Dendritic cell treated with granulocyte-macrophage colony-stimulating factor and Interleukin-4, amounts not matched to agents 40 ng/mL and 50 ng/mL, for 4 days (primary cell): ENCODE measurements at regions of chr6 and their contacts with region 1.

Region 1: DNA sequence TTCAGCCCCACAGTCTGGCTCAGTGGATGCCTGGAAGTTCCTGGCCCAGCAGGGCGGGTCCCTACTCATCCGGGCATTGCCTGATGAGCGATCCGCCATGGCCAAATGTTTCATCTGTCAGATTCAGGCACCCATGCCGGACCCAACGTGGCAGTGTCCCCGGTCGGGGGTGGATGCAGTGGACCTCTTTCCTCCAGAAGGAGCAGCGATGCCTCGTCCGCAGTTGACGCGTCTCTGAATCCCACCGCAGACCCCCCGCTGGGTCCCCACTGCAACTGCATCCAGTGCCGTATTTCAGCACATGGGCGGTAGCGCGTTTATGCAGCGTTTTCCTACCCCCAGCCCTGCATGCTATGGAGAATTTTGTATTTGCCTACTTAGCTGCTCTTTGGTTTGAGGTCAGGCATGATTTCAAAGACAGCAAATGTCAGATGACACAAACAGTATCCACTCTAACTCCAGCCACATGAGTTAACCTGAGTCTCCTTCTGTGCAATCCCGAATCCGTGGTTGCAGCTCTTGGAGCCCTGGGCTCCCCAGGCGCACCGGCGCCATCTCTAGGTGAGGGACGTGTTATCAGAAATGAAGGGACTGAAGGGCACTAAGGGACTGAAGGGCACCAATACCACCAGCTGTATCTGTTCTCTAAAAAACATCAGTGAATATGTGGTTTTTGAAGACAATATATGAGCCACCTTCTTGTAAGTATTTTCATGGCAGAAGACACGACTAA is 72.6 kb upstream of the THBS2 start:
- H3K4me3 Mint-ChIP-seq: no peak overlapping the region
- H3K27ac Mint-ChIP-seq: no peak overlapping the region
- H3K4me1 Mint-ChIP-seq: peaks cover 10% of the 10 kb centered on the region
- H3K27me3 Mint-ChIP-seq: peaks cover 2% of the 10 kb centered on the region

Region 2: GRCh38 chr6:168895102-168895812 is 431.0 kb before region 1 on chr6:
- intact Hi-C with region 1: loop called (anchors 5 kb)
- H3K4me3 Mint-ChIP-seq: no peak overlapping the region
- H3K27ac Mint-ChIP-seq: no peak overlapping the region
- H3K4me1 Mint-ChIP-seq: peaks cover 6% of the 10 kb centered on the region
- H3K27me3 Mint-ChIP-seq: peaks cover 4% of the 10 kb centered on the region